GM13977 (cell line): ENCODE measurements at regions of chr9 and their contacts with region 1.

Region 1: GRCh38 chr9:114681594-114682332 is at the start of gene TEX48:
- DNase-seq: peak; percentile 64
- CTCF ChIP-seq: peak; percentile 84

Region 2: DNA sequence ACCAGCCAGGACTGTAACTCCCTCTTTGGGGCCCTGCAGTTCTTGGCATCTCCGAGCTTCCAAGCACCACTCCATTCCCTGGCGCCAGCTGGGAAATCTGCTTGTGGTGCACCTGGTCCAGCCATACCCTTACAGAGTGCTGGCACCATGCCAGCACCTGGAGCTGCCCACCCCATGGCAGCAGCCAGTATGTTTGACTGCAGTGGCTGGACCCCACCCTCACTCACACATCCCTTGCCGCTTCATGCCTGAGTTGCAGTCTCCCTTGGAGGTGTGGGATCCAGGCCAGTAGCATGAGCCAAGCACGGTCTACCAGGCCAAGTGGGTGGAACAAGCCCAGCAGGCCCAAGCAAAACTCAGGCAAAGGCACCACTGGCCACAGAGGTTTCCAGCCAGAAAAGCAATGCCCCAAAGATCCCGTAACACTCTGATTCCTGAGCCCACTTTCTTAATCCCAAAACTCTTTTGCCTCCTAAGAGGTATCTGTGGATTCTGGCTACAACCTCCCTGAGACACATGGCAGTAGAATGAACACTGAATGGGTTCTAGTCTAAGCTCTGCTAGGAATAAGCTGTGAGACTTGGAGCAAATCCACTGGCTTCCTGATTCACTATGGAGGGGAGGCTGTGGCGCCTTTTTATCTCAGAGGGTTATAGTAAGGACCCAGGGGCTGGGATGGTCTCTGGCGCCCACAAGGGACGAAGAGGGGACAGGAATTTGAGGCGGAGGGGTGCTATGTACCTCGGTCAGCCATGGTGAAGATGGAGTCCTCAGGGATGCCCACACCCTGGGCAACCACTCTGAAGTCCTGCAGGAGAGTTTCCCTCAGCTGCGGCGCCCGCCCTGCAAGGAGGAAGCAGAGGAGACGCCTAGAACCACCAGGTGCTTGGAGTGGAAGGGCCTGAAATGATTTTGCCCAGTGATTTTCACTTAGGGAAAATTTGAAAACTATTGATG is 609.3 kb before region 1 on chr9:
- in situ Hi-C with region 1: no loop called
- DNase-seq: no peak
- CTCF ChIP-seq: no peak

Region 3: DNA sequence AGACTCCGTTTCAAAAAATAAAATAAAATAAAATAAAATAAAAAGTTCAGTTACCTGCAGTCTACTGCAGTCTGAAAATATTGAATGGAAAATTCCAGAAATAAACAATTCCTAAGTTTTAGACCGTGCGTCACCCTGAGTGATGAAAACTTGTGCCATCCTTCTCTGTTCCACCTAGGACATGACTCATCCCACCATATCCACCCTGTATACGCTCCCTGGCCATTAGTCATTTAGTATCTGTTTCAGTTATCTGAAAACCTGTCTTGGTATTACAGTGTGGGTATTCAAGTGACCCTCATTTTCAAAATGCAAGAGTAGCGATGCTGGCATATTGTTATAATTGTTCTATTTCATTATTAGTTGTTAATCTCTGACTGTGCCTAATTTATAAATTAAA is 52.1 kb after region 1 on chr9:
- in situ Hi-C with region 1: loop called (anchors 5 kb)
- DNase-seq: no peak
- CTCF ChIP-seq: no peak

Region 4: DNA sequence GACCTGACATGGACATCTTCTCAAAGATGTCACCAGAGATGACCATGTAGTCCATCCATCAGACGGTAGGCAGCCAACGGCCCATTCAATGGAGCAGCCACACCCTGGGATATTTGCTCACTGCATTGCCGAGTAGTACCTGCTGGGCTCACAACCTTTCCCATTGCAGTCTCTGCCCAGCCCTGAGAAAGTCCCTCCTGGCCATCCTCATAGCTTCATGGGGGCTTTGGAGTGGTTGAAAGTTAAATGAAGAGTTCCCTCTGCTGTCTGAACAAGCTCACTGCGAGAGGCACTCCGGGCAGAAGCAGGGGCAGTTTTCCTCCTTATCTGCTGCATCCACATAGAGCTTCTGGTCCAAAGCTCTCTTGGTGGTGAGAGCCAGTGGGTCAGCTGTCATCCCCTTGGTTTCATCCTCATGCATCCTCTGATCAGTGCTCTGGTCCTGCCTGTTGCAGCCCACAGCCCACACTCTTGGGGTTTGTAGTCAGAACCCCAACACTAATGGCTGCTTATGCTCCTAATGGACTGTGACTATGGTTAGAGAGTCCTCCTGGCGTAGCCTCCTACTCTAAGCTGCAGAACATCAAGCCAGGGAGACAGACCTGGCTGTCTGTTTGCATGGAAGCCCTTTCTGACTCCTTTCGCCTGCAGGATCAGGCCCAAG is 225.3 kb after region 1 on chr9:
- in situ Hi-C with region 1: loop called (anchors 10 kb)
- DNase-seq: peak; percentile 29
- CTCF ChIP-seq: peak; percentile 61

Region 5: GRCh38 chr9:115013998-115014397 is 332.2 kb after region 1 on chr9:
- in situ Hi-C with region 1: loop called (anchors 5 kb)
- DNase-seq: peak; percentile 64
- CTCF ChIP-seq: peak; percentile 60

Region 6: GRCh38 chr9:115204904-115205453 is 523.2 kb after region 1 on chr9:
- in situ Hi-C with region 1: loop called (anchors 25 kb)
- DNase-seq: peak; percentile 16
- CTCF ChIP-seq: no peak

Region 7: GRCh38 chr9:115524453-115525059 is 842.8 kb after region 1 on chr9:
- in situ Hi-C with region 1: loop called (anchors 25 kb)
- DNase-seq: peak; percentile 35
- CTCF ChIP-seq: peak; percentile 56